GM12878 (cell line): ENCODE measurements at regions of chr2 and their contacts with region 1.

Region 1: GRCh38 chr2:165401285-165401852 is 68.1 kb upstream of the CSRNP3 start:
- DNase-seq: peak; percentile 9
- ATAC-seq: peak; percentile 77
- H3K4me3 ChIP-seq: no peak overlapping the region
- H3K27ac ChIP-seq: no peak overlapping the region
- H3K4me1 ChIP-seq: no peaks in the 10 kb centered on the region
- H3K27me3 ChIP-seq: no peaks in the 10 kb centered on the region
- CTCF ChIP-seq: peak; percentile 54 to 69 (median 66); a peak in 5 of 6 replicates
- EP300 ChIP-seq: no peak
- POLR2A ChIP-seq: no peak
- RAD21 ChIP-seq: peak; percentile 81

Region 2: GRCh38 chr2:165305391-165306096 is 95.8 kb before region 1 on chr2:
- CTCF ChIA-PET with region 1: no interaction called
- POLR2A ChIA-PET with region 1: no interaction called
- RAD21 ChIA-PET with region 1: no interaction called
- SMC1A ChIA-PET with region 1: no interaction called
- in situ Hi-C with region 1: no loop called
- intact Hi-C with region 1: no loop called
- DNase-seq: no peak
- ATAC-seq: no peak
- H3K4me3 ChIP-seq: no peak overlapping the region
- H3K27ac ChIP-seq: no peak overlapping the region
- H3K4me1 ChIP-seq: no peaks in the 10 kb centered on the region
- H3K27me3 ChIP-seq: no peaks in the 10 kb centered on the region
- CTCF ChIP-seq: no peak
- EP300 ChIP-seq: no peak
- POLR2A ChIP-seq: no peak
- RAD21 ChIP-seq: no peak

Region 3: GRCh38 chr2:165434865-165435496 is 33.6 kb after region 1 on chr2:
- CTCF ChIA-PET with region 1: interaction called, 13 read pairs
- POLR2A ChIA-PET with region 1: no interaction called
- RAD21 ChIA-PET with region 1: interaction called, 4 read pairs
- SMC1A ChIA-PET with region 1: interaction called, 36 read pairs
- in situ Hi-C with region 1: no loop called
- intact Hi-C with region 1: no loop called
- DNase-seq: no peak
- ATAC-seq: no peak
- H3K4me3 ChIP-seq: no peak overlapping the region
- H3K27ac ChIP-seq: no peak overlapping the region
- H3K4me1 ChIP-seq: no peaks in the 10 kb centered on the region
- H3K27me3 ChIP-seq: no peaks in the 10 kb centered on the region
- CTCF ChIP-seq: no peak
- EP300 ChIP-seq: no peak
- POLR2A ChIP-seq: no peak
- RAD21 ChIP-seq: no peak

Region 4: GRCh38 chr2:165450156-165450555 is 48.8 kb after region 1 on chr2:
- CTCF ChIA-PET with region 1: interaction called, 40 read pairs
- POLR2A ChIA-PET with region 1: no interaction called
- RAD21 ChIA-PET with region 1: interaction called, 25 read pairs
- SMC1A ChIA-PET with region 1: interaction called, 34 read pairs
- in situ Hi-C with region 1: no loop called
- intact Hi-C with region 1: no loop called
- DNase-seq: no peak
- ATAC-seq: peak; percentile 59
- H3K4me3 ChIP-seq: no peak overlapping the region
- H3K27ac ChIP-seq: no peak overlapping the region
- H3K4me1 ChIP-seq: no peaks in the 10 kb centered on the region
- H3K27me3 ChIP-seq: no peaks in the 10 kb centered on the region
- CTCF ChIP-seq: no peak; a peak in 1 of 6 replicates
- EP300 ChIP-seq: no peak
- POLR2A ChIP-seq: no peak
- RAD21 ChIP-seq: no peak

Region 5: DNA sequence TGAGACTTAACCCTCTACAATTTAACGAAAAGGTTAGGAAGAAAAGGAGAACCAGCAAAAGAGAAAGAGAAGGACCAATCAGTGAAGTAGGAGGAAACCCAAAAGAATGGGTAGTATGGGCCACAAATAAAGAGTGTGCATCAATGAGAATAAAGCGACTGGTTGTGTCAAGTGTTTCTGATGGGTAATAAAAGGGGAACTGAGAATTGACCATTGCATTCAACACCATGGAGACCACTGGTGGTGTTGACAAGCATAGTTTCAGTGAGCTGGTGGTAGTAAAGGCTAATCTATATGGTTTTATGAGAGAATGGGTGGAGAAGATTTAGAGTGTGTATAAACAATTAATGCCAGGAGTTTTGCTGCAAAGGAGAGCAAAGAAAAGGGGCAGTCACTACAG is 143.5 kb after region 1 on chr2:
- CTCF ChIA-PET with region 1: interaction called, 4 read pairs
- POLR2A ChIA-PET with region 1: no interaction called
- RAD21 ChIA-PET with region 1: interaction called, 3 read pairs
- SMC1A ChIA-PET with region 1: interaction called, 21 read pairs
- in situ Hi-C with region 1: no loop called
- intact Hi-C with region 1: no loop called
- DNase-seq: no peak
- ATAC-seq: peak; percentile 99
- H3K4me3 ChIP-seq: no peak overlapping the region
- H3K27ac ChIP-seq: no peak overlapping the region
- H3K4me1 ChIP-seq: no peaks in the 10 kb centered on the region
- H3K27me3 ChIP-seq: no peaks in the 10 kb centered on the region
- CTCF ChIP-seq: no peak
- EP300 ChIP-seq: peak; percentile 8 to 70; a peak in 1 of 4 replicates
- POLR2A ChIP-seq: no peak
- RAD21 ChIP-seq: no peak

Region 6: DNA sequence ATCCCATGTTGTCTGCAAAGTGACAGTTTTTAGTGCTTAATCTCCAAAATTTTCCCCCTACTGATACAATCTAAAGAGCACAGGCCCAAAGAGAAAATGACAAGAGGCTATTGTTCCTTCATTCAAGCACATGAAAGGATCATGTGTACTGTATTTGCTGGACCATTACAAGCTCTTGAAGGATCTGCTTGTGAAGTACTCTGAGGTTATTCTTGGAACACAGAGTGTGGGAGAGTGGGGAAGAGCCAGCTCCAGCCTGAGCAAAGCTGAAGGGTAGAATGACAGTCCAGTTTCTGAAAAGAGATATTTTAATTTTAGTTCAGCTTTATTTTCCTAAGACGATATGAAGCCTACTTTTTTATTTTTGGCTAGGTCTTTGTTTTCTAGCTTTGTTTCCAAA is 280.5 kb after region 1 on chr2:
- CTCF ChIA-PET with region 1: interaction called, 15 read pairs
- POLR2A ChIA-PET with region 1: no interaction called
- RAD21 ChIA-PET with region 1: no interaction called
- SMC1A ChIA-PET with region 1: no interaction called
- in situ Hi-C with region 1: no loop called
- intact Hi-C with region 1: no loop called
- DNase-seq: no peak
- ATAC-seq: no peak
- H3K4me3 ChIP-seq: no peak overlapping the region
- H3K27ac ChIP-seq: no peak overlapping the region
- H3K4me1 ChIP-seq: no peaks in the 10 kb centered on the region
- H3K27me3 ChIP-seq: no peaks in the 10 kb centered on the region
- CTCF ChIP-seq: no peak
- EP300 ChIP-seq: no peak
- POLR2A ChIP-seq: no peak
- RAD21 ChIP-seq: no peak

Region 7: DNA sequence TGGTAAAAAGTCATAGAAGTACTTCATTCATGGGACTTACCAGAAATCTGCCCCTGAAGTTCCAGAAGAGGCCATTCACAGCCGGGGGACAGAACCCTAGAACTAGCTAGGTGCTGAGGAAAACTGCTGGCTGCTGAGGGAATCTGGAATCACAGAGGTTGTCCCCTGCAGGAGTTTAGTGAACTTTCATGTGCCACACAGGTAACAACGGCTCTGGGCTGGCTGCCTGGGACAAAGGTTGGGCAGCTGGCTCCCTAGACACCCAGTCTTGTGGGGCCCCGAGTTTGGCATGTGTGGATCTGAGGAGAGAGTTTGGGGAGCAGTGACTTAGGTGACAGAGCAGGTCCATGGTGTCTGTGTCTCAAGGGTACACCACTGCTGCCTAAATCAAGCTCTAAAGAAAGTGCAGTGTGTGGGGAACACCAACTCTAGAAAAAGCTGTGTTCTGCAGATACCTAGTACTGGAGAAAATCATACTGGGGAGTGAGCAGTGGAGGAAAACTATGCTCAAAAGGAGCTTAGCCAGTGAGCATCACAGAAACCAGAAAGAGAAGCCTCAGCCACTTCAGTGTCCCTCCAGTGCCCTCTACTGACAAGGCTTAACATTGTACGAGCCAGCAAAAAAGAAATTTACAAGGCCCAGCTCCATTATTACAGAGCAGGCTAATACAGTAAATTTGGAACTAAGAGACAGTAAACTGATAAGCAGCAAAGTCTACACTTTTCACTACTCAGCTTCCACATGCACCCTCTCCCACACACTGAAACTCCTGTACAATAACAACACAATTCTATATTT is 377.5 kb after region 1 on chr2:
- CTCF ChIA-PET with region 1: interaction called, 9 read pairs
- POLR2A ChIA-PET with region 1: no interaction called
- RAD21 ChIA-PET with region 1: interaction called, 9 read pairs
- SMC1A ChIA-PET with region 1: interaction called, 5 read pairs
- in situ Hi-C with region 1: no loop called
- intact Hi-C with region 1: loop called (anchors 1 kb)
- DNase-seq: no peak
- ATAC-seq: peak; percentile 93
- H3K4me3 ChIP-seq: no peak overlapping the region
- H3K27ac ChIP-seq: no peak overlapping the region
- H3K4me1 ChIP-seq: no peaks in the 10 kb centered on the region
- H3K27me3 ChIP-seq: no peaks in the 10 kb centered on the region
- CTCF ChIP-seq: peak; percentile 43 to 50 (median 46); a peak in 5 of 6 replicates
- EP300 ChIP-seq: no peak
- POLR2A ChIP-seq: no peak
- RAD21 ChIP-seq: peak; percentile 50